ENCODE measurements at regions of chr9 and their contacts with region 1.

Region 1: GRCh38 chr9:114405294-114406034 is 17.7 kb upstream of the AKNA start:
- DNase-seq: peak; percentile 81 to 82
- H3K4me3 ChIP-seq: no peak overlapping the region
- H3K4me3 Mint-ChIP-seq: no peak overlapping the region
- H3K27ac Mint-ChIP-seq: no peak overlapping the region
- H3K4me1 ChIP-seq: peaks cover 9% of the 10 kb centered on the region
- H3K4me1 Mint-ChIP-seq: no peaks in the 10 kb centered on the region
- H3K27me3 ChIP-seq: no peaks in the 10 kb centered on the region
- H3K27me3 Mint-ChIP-seq: no peaks in the 10 kb centered on the region
- CTCF ChIP-seq: peak; percentile 75 to 88

Region 2: GRCh38 chr9:114366334-114367128 is 38.9 kb before region 1 on chr9:
- CTCF ChIA-PET with region 1: no interaction called
- POLR2A ChIA-PET with region 1: no interaction called
- intact Hi-C with region 1: no loop called
- DNase-seq: no peak
- H3K4me3 ChIP-seq: no peak overlapping the region
- H3K4me3 Mint-ChIP-seq: no peak overlapping the region
- H3K27ac Mint-ChIP-seq: peak overlapping the region; percentile 13
- H3K4me1 ChIP-seq: peaks cover 13% of the 10 kb centered on the region
- H3K4me1 Mint-ChIP-seq: peaks cover 13% of the 10 kb centered on the region
- H3K27me3 ChIP-seq: no peaks in the 10 kb centered on the region
- H3K27me3 Mint-ChIP-seq: no peaks in the 10 kb centered on the region
- CTCF ChIP-seq: no peak

Region 3: GRCh38 chr9:114417511-114417910 is 12.0 kb after region 1 on chr9:
- CTCF ChIA-PET with region 1: interaction called, 27 read pairs
- POLR2A ChIA-PET with region 1: no interaction called
- intact Hi-C with region 1: no loop called
- DNase-seq: no peak
- H3K4me3 ChIP-seq: no peak overlapping the region
- H3K4me3 Mint-ChIP-seq: no peak overlapping the region
- H3K27ac Mint-ChIP-seq: no peak overlapping the region
- H3K4me1 ChIP-seq: no peaks in the 10 kb centered on the region
- H3K4me1 Mint-ChIP-seq: no peaks in the 10 kb centered on the region
- H3K27me3 ChIP-seq: no peaks in the 10 kb centered on the region
- H3K27me3 Mint-ChIP-seq: no peaks in the 10 kb centered on the region
- CTCF ChIP-seq: no peak

Region 4: DNA sequence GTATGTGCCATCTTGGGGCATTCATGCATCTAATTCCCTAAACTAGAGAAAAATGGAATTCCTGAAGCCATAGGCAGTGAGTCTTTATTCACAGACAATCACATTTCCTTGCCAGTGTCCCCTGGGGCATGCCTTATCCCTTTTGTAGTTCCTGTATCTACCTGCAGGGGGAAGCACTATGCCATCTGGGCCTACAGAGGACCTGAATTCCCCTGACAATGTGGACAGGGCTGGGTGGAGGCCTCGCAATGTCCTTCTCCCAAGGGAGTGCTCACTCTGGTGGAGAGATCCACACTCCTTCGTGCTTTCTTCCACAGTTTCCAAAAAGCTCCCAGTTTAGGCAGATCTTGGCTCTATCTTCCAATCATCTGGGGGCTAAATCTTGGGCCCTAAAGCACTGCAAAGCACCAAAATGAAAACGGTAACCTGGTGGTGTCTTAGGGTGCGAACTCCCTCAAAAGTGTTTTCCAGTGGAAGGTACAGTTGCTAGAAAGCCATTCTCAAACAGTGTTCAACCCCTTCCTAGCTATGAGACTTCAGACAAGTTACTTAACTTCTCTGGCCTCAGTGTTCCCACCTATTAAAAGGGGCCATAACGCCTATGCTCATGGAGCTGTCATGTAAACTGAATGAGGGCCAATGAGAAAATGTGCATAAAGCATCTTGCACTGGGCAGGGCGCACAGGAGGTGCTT is 82.3 kb after region 1 on chr9:
- CTCF ChIA-PET with region 1: no interaction called
- POLR2A ChIA-PET with region 1: no interaction called
- intact Hi-C with region 1: loop called (anchors 1 kb)
- DNase-seq: peak; percentile 74 to 84
- H3K4me3 ChIP-seq: no peak overlapping the region
- H3K4me3 Mint-ChIP-seq: no peak overlapping the region
- H3K27ac Mint-ChIP-seq: no peak overlapping the region
- H3K4me1 ChIP-seq: no peaks in the 10 kb centered on the region
- H3K4me1 Mint-ChIP-seq: no peaks in the 10 kb centered on the region
- H3K27me3 ChIP-seq: no peaks in the 10 kb centered on the region
- H3K27me3 Mint-ChIP-seq: no peaks in the 10 kb centered on the region
- CTCF ChIP-seq: peak; percentile 79 to 86

Region 5: GRCh38 chr9:114505187-114506081 is 100.0 kb after region 1 on chr9 and contains the start of gene WHRN:
- CTCF ChIA-PET with region 1: interaction called, 6 read pairs
- POLR2A ChIA-PET with region 1: no interaction called
- intact Hi-C with region 1: loop called (anchors 1 kb)
- DNase-seq: peak; percentile 94 to 95
- H3K4me3 ChIP-seq: peak within 1 kb of the TSS; percentile 45
- H3K4me3 Mint-ChIP-seq: peak within 1 kb of the TSS; percentile 88
- H3K27ac Mint-ChIP-seq: peak within 1 kb of the TSS; percentile 95
- H3K4me1 ChIP-seq: peaks cover 4% of the 10 kb centered on the region; the same call in 1 of the 2 replicates
- H3K4me1 Mint-ChIP-seq: peaks cover 12% of the 10 kb centered on the region
- H3K27me3 ChIP-seq: peaks cover 1% of the 10 kb centered on the region; the same call in 1 of the 2 replicates
- H3K27me3 Mint-ChIP-seq: peaks cover 24% of the 10 kb centered on the region
- CTCF ChIP-seq: no peak
- total RNA-seq, gene WHRN: 1.4 and 1.6 TPM in 2 replicates

Region 6: DNA sequence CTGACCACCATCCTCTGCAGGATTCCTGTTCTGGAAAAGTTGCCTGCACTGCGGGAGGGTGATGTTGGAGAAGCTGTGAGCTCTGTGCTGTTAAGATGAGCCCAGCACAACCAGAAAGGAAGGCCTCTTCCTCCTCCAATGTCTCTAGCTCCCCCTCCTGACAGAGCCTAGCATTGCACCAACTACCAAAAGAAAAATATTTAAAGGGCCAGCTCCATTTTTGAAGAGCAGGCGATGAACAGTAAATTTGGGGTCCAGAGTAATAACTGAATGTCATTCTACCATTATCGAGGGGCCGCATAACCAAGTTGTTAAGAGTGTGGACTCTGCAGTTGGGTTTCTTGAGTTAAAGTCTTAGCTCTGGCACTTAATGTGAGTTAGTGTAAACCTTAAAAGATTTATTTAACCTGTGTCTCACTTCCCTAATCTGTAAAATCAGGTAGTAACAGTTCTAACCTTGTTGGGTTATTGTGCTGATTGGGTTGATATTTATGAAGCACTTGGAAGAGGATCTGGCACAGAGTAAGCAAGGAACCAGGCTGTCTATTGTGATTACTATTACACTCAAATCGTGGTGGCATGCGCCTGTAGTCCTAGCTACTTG is 248.2 kb after region 1 on chr9:
- CTCF ChIA-PET with region 1: interaction called, 70 read pairs
- POLR2A ChIA-PET with region 1: no interaction called
- intact Hi-C with region 1: loop called (anchors 1 kb)
- DNase-seq: peak; percentile 72 to 85
- H3K4me3 ChIP-seq: no peak overlapping the region
- H3K4me3 Mint-ChIP-seq: no peak overlapping the region
- H3K27ac Mint-ChIP-seq: no peak overlapping the region
- H3K4me1 ChIP-seq: no peaks in the 10 kb centered on the region
- H3K4me1 Mint-ChIP-seq: no peaks in the 10 kb centered on the region
- H3K27me3 ChIP-seq: no peaks in the 10 kb centered on the region
- H3K27me3 Mint-ChIP-seq: no peaks in the 10 kb centered on the region
- CTCF ChIP-seq: peak; percentile 88 to 92